MCF 10A (cell line): ENCODE measurements at regions of chr5 and their contacts with region 1.

Region 1: GRCh38 chr5:169980418-169981053 is at the start of gene INSYN2B:
- DNase-seq: peak; percentile 93
- H3K4me3 Mint-ChIP-seq: peak within 1 kb of the TSS; percentile 69
- H3K27ac Mint-ChIP-seq: no peak within 1 kb of the TSS
- H3K4me1 Mint-ChIP-seq: peaks cover 24% of the 10 kb centered on the region
- H3K27me3 Mint-ChIP-seq: no peaks in the 10 kb centered on the region
- CTCF ChIP-seq: peak; percentile 78
- total RNA-seq, gene INSYN2B: 0.19 and 0.49 TPM in 2 replicates

Region 2: GRCh38 chr5:168679515-168679920 is 1301.0 kb before region 1 on chr5:
- CTCF ChIA-PET with region 1: interaction called, 3 read pairs
- POLR2A ChIA-PET with region 1: no interaction called
- intact Hi-C with region 1: loop called (anchors 10 kb)
- DNase-seq: peak; percentile 84
- H3K4me3 Mint-ChIP-seq: no peak overlapping the region
- H3K27ac Mint-ChIP-seq: no peak overlapping the region
- H3K4me1 Mint-ChIP-seq: no peaks in the 10 kb centered on the region
- H3K27me3 Mint-ChIP-seq: no peaks in the 10 kb centered on the region
- CTCF ChIP-seq: peak; percentile 96

Region 3: DNA sequence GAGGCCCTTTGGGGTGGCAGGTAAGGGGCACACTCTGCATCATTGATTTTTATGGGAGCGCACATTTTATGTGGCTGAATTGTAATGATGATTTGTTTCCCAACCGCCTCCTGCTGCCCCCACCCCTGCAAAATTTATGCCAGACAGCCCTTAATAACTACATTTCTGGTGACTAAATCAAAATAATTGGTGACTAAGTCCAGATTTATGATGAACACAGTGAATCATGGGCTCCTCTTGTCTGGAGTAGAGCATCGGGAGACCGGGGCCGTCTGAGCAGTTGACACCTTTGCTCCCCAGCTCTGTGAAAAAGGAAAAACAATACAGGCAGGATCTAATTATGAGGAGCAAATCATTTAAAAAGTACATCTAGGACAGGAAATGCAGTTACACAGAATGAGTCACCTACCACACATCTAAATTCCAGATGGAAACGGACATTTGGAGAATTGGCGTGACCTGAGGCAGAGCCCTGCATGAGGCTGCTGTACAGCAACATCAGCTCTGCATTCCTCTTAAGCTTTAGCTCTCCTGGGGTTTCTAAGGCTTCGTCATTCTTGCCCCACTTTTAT is 284.5 kb before region 1 on chr5:
- CTCF ChIA-PET with region 1: interaction called, 13 read pairs
- POLR2A ChIA-PET with region 1: no interaction called
- intact Hi-C with region 1: loop called (anchors 1 kb)
- DNase-seq: peak; percentile 89
- H3K4me3 Mint-ChIP-seq: peak overlapping the region; percentile 46
- H3K27ac Mint-ChIP-seq: peak overlapping the region; percentile 14
- H3K4me1 Mint-ChIP-seq: peaks cover 39% of the 10 kb centered on the region
- H3K27me3 Mint-ChIP-seq: no peaks in the 10 kb centered on the region
- CTCF ChIP-seq: no peak

Region 4: GRCh38 chr5:169716278-169716677 is 264.3 kb before region 1 on chr5:
- CTCF ChIA-PET with region 1: interaction called, 15 read pairs
- POLR2A ChIA-PET with region 1: interaction called, 4 read pairs
- intact Hi-C with region 1: no loop called
- DNase-seq: peak; percentile 73
- H3K4me3 Mint-ChIP-seq: no peak overlapping the region
- H3K27ac Mint-ChIP-seq: no peak overlapping the region
- H3K4me1 Mint-ChIP-seq: peaks cover 20% of the 10 kb centered on the region
- H3K27me3 Mint-ChIP-seq: no peaks in the 10 kb centered on the region
- CTCF ChIP-seq: no peak

Region 5: DNA sequence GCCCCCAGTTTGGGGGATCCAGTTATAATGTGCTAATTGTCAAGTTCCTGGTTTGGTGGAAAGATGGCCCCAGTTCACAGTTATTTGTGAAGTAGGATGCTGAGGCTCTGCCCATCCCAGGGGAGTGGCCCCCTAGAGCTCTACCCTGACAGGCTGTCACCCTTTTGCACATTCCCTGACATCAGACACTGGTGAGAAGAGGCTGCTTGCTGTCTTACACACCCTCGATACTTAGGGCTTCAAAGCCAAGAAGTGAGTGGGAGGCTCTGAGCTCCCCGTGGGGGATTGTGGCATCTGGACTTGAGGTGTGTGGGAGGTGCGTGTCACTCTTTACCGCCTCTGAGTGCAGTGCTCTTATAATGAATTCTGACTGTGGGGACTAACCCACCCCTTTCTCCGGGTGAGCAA is 175.0 kb before region 1 on chr5:
- CTCF ChIA-PET with region 1: interaction called, 12 read pairs
- POLR2A ChIA-PET with region 1: no interaction called
- intact Hi-C with region 1: no loop called
- DNase-seq: no peak
- H3K4me3 Mint-ChIP-seq: no peak overlapping the region
- H3K27ac Mint-ChIP-seq: no peak overlapping the region
- H3K4me1 Mint-ChIP-seq: no peaks in the 10 kb centered on the region
- H3K27me3 Mint-ChIP-seq: no peaks in the 10 kb centered on the region
- CTCF ChIP-seq: no peak

Region 6: DNA sequence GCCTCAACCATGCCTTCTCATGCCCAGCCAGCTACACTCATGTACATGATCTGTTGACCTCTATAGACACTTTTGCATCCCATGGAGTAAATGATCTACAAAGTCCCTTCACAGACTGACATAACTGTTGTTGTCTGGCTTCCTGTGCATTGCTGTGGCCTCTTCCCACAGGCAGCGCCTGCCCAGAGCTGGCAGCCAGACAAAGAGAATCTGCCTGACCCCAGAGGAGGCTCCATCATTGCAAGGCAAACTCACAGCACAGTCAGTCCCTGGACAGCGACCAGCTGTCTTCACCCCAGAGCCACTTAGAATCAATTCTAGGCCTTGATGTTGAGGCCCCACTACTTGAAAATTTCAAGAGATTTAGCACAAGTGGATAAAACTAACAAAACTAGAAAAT is 65.8 kb before region 1 on chr5:
- CTCF ChIA-PET with region 1: interaction called, 20 read pairs
- POLR2A ChIA-PET with region 1: no interaction called
- intact Hi-C with region 1: loop called (anchors 1 kb)
- DNase-seq: peak; percentile 24
- H3K4me3 Mint-ChIP-seq: no peak overlapping the region
- H3K27ac Mint-ChIP-seq: no peak overlapping the region
- H3K4me1 Mint-ChIP-seq: no peaks in the 10 kb centered on the region
- H3K27me3 Mint-ChIP-seq: no peaks in the 10 kb centered on the region
- CTCF ChIP-seq: no peak

Region 7: DNA sequence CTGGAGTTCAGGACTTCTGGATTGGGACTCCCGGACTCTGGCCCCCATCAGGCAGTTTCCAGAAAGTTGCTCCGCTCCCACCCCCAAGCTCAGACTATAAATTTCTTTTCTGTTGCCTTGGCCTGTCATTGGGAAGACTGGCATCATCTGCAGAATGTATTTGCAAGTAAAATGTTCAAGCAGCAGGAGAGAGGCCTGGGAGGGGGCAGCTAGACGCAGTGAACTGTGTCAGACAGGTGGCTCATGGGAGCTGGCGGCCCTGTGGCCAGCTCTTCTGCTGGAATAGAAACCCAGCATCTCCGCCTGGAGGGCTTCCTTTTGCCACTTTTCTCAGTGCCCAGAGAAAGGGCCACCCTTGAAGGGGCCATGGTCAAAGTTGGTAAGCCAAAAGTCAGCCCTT is 16.3 kb before region 1 on chr5:
- CTCF ChIA-PET with region 1: interaction called, 30 read pairs
- POLR2A ChIA-PET with region 1: no interaction called
- intact Hi-C with region 1: no loop called
- DNase-seq: no peak
- H3K4me3 Mint-ChIP-seq: no peak overlapping the region
- H3K27ac Mint-ChIP-seq: no peak overlapping the region
- H3K4me1 Mint-ChIP-seq: no peaks in the 10 kb centered on the region
- H3K27me3 Mint-ChIP-seq: no peaks in the 10 kb centered on the region
- CTCF ChIP-seq: no peak

Region 8: GRCh38 chr5:170534177-170534576 is 553.6 kb after region 1 on chr5:
- CTCF ChIA-PET with region 1: no interaction called
- POLR2A ChIA-PET with region 1: no interaction called
- intact Hi-C with region 1: no loop called
- DNase-seq: peak; percentile 24
- H3K4me3 Mint-ChIP-seq: no peak overlapping the region
- H3K27ac Mint-ChIP-seq: no peak overlapping the region
- H3K4me1 Mint-ChIP-seq: no peaks in the 10 kb centered on the region
- H3K27me3 Mint-ChIP-seq: peaks cover 33% of the 10 kb centered on the region
- CTCF ChIP-seq: no peak